Naive thymus-derived CD8-positive, alpha-beta T cell (primary cell): ENCODE measurements at regions of chr5 and their contacts with region 1.

Region 1: DNA sequence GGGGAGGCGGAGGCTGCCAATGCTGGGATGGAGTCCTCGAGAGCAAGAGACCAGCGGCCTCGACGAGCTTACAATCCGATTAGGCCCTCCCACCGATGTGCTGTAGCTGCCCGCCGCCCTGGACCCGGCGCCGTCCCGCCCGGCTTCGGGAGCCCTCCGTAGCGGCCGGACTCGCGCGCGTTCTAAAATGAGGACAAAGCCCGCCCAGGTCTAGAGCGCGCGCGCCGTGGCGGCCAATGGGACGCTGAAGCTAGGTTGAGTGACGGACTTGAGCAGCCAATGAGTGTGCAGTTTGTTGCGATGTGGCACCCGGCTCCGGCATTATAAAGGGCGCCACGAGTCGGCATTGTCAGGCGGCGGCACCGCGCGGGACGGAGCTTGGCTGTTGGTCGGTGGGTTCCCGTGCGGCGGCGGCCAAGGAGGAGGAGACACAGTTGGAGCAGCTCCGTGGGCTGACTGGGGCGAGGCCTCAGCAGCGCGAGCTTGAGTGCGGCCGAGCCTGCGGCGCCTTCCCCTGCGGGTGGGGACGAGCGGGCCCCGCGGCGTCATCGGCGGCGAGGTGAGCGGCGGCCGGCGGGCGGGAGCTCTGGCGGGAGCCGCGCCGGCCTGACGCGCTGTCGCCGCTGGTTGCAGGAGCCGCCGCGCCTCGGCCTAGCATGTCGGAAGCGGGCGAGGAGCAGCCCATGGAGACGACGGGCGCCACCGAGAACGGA is at the start of gene HNRNPAB:
- DNase-seq: peak; percentile 93 to 98 (median 96)
- ATAC-seq: peak; percentile 74 to 86
- H3K4me3 Mint-ChIP-seq: peak within 1 kb of the TSS; percentile 88 to 100 (median 98)
- H3K27ac Mint-ChIP-seq: peak within 1 kb of the TSS; percentile 95 to 100 (median 99)
- H3K4me1 Mint-ChIP-seq: peaks cover 23 to 42% (median 38%) of the 10 kb centered on the region in 4 donors
- H3K27me3 Mint-ChIP-seq: peaks cover 0 to 3% (median 0%) of the 10 kb centered on the region in 5 donors
- polyA plus RNA-seq, gene HNRNPAB: 43.6 to 74.9 (median 61.2) TPM

Region 2: DNA sequence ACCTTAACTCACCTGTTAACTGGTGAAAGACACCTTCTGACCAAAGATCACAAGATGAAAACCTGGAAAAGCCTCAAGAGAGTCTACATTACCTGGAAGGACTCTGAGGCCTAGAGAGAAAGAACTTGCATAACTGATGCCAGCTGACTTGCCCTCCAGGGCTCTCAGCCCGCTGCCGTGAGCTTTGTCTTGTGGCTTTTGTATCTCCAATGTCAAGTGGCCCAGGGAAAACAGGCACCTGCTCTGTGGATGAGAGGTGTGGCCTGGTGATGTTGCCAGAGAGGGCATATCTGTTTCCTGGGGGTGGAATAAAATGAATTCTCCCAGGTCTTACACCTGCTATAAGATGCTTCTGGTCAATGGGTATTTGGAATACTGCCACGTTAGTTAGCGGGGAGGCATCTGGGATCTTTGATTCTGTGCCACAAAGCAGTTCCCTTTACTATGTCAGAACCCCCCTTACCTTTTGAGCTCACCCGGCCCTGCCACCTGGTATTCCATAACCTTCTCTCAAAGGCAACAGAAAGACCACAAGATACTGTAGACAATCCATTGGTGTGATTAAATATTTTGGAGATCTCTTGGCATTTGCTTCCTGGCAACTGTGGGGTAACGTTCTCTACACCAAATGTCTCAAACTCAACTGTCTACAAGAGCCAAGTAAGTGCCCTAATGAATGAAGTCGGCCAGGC is 145.9 kb before region 1 on chr5:
- POLR2A ChIA-PET with region 1: no interaction called
- DNase-seq: no peak
- ATAC-seq: no peak
- H3K4me3 Mint-ChIP-seq: no peak overlapping the region
- H3K27ac Mint-ChIP-seq: no peak overlapping the region
- H3K4me1 Mint-ChIP-seq: peaks cover 4 to 12% (median 8%) of the 10 kb centered on the region in 4 donors
- H3K27me3 Mint-ChIP-seq: no peaks in the 10 kb centered on the region

Region 3: DNA sequence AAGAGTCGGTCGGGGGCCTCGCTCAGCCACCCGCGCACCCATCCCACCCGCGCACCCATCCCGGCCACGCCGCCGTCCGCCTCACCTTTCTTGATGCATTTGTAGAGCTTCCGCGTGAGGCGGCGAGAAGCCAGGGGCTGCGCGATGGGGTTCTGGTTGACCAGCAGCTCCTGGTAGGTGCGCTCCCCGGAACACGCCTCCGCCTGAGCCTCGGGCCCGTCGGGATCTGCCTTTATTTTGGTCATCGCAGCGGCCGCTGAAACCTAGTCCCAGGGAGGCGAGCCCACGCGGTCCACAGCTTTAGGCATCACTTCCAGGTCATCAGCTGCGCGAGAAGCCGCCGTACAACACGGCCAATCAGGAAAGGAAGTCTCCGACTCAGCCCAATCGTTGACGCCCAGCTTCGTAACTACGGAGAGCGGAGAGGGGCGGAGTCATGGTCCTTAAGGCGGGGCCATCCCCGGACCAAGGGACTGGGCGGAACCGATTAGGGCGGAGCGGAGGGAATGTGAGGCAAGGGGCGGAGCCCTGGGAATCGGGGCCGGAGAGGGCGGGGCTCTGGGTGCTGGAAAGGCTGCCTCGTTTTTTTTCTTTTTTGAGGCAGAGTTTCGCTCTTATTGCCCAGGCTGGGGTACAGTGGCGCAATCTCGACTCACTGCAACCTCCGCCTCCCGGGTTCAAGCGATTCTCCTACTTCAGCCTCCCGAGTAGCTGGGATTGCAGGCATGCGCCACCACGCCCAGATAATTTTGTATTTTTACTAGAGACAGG is 50.6 kb before region 1 on chr5 and contains the start of gene NHP2:
- POLR2A ChIA-PET with region 1: interaction called, 11 read pairs
- DNase-seq: peak; percentile 91 to 98 (median 95)
- ATAC-seq: peak; percentile 98
- H3K4me3 Mint-ChIP-seq: peak within 1 kb of the TSS; percentile 88 to 98 (median 97)
- H3K27ac Mint-ChIP-seq: peak within 1 kb of the TSS; percentile 89 to 97 (median 94)
- H3K4me1 Mint-ChIP-seq: peaks cover 12 to 46% (median 41%) of the 10 kb centered on the region in 4 donors
- H3K27me3 Mint-ChIP-seq: no peaks in the 10 kb centered on the region
- polyA plus RNA-seq, gene NHP2: 238 to 276 (median 270) TPM

Region 4: DNA sequence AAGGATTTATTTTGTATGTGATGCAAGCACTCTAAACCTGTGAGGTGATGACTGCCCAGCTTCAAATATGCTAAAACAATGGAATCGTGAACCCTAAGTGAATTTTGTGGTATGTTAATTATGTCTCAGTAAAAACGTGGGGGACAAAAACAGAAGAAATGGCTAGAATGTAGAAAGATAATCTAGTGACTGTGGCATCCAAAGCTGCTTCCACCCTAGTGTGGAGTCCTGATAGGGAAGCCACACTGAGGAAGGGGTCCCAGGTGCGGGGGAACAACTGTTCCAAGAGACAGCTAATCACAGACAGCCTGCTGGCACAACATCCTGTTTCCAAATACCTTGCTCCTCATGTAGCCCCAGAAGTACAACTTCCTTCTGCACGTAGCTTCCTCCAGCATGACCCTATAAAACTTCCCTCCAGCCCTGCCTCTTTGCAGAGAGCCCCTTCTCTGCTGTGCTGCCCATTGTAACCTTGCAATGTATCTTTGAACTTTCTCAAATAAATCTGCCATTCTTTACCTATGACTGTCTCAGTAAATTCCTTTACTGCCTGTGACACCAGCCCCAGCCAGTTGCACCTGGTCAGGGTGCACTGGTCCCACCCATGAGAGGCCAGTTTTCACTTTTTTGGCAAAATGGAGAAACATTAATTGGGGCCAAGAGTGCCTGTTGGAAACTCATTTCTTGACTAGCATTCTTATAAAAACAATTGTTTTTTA is 22.0 kb before region 1 on chr5:
- POLR2A ChIA-PET with region 1: interaction called, 12 read pairs
- DNase-seq: no peak
- ATAC-seq: no peak
- H3K4me3 Mint-ChIP-seq: no peak overlapping the region
- H3K27ac Mint-ChIP-seq: peak overlapping the region in 3 of 10 donors; percentile 19 to 57 (median 39)
- H3K4me1 Mint-ChIP-seq: peaks cover 2 to 10% (median 8%) of the 10 kb centered on the region in 4 donors
- H3K27me3 Mint-ChIP-seq: peaks cover 0 to 5% (median 0%) of the 10 kb centered on the region in 5 donors

Region 5: GRCh38 chr5:178232124-178232919 is 28.0 kb after region 1 on chr5 and contains the start of gene PHYKPL:
- POLR2A ChIA-PET with region 1: interaction called, 22 read pairs
- DNase-seq: peak; percentile 37 to 79 (median 62)
- ATAC-seq: peak; percentile 68 to 72
- H3K4me3 Mint-ChIP-seq: peak within 1 kb of the TSS; percentile 76 to 90 (median 82)
- H3K27ac Mint-ChIP-seq: peak within 1 kb of the TSS; percentile 68 to 96 (median 92)
- H3K4me1 Mint-ChIP-seq: peaks cover 36 to 85% (median 83%) of the 10 kb centered on the region in 4 donors
- H3K27me3 Mint-ChIP-seq: no peaks in the 10 kb centered on the region
- polyA plus RNA-seq, gene PHYKPL: 41.1 to 51.8 (median 49.7) TPM

Region 6: GRCh38 chr5:178388386-178389025 is 184.2 kb after region 1 on chr5:
- POLR2A ChIA-PET with region 1: no interaction called
- DNase-seq: peak in 2 of 10 donors; percentile 13 to 41
- ATAC-seq: no peak
- H3K4me3 Mint-ChIP-seq: no peak overlapping the region
- H3K27ac Mint-ChIP-seq: no peak overlapping the region
- H3K4me1 Mint-ChIP-seq: peaks cover 0 to 2% (median 0%) of the 10 kb centered on the region in 4 donors
- H3K27me3 Mint-ChIP-seq: peaks cover 4 to 12% (median 5%) of the 10 kb centered on the region in 5 donors